Activated T-helper 1 cell treated with anti-CD3 and anti-CD28 coated beads, Interleukin-12 subunit alpha, Interleukin-12 subunit beta, Interleukin-2, Interleukin-4 antibody, amounts not matched to agents 30 ng/mL and 10 ng/mL and 1 ng/mL, durations not matched to agents 14 hours and 24 hours and 36 hours (primary cell): ENCODE measurements at regions of chr9 and their contacts with region 1.

Region 1: DNA sequence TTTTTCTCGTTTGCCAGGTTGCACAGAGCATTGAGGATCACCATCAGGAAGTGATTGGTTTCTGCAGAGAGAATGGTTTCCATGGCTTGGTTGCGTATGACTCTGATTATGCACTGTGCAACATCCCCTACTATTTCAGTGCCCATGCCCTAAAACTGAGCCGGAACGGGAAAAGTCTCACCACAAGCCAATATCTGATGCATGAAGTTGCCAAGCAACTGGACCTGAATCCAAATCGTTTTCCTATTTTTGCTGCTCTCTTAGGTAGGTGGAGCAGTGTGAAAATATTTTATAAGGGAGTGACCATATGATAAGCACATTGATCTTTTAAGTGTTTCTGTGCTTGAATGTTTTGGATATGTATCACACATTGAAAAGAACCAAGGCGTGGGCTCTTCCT is 17.7 kb upstream of the FAM120AOS start:
- DNase-seq: no peak
- H3K4me3 Mint-ChIP-seq: no peak overlapping the region
- H3K27ac Mint-ChIP-seq: no peak overlapping the region
- H3K4me1 Mint-ChIP-seq: peaks cover 68% of the 10 kb centered on the region
- H3K27me3 Mint-ChIP-seq: no peaks in the 10 kb centered on the region

Region 2: GRCh38 chr9:93319992-93320500 is 151.1 kb before region 1 on chr9:
- intact Hi-C with region 1: no loop called
- DNase-seq: no peak
- H3K4me3 Mint-ChIP-seq: no peak overlapping the region
- H3K27ac Mint-ChIP-seq: no peak overlapping the region
- H3K4me1 Mint-ChIP-seq: no peaks in the 10 kb centered on the region
- H3K27me3 Mint-ChIP-seq: peaks cover 10% of the 10 kb centered on the region

Region 3: DNA sequence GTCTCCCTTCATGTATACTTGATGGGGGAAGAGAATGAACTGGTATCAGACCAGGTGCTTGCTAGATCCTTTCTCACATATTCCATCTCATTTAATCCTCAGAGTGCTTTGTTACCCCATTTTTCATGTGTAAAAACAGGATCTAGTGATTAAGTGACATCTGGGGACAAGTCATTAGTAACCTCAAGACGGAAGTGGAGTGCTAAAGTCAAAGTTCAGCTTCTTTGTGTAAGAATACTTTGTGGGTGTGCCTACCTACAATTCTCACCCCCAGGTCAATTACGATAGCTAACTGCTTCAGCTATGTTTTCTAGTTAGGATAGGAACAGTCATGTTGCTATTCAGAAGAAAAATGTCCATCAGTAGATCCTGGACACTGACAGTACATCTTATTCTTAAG is 14.6 kb before region 1 on chr9:
- intact Hi-C with region 1: no loop called
- DNase-seq: no peak
- H3K4me3 Mint-ChIP-seq: peak overlapping the region; percentile 50
- H3K27ac Mint-ChIP-seq: peak overlapping the region; percentile 62
- H3K4me1 Mint-ChIP-seq: peaks cover 70% of the 10 kb centered on the region
- H3K27me3 Mint-ChIP-seq: no peaks in the 10 kb centered on the region

Region 4: DNA sequence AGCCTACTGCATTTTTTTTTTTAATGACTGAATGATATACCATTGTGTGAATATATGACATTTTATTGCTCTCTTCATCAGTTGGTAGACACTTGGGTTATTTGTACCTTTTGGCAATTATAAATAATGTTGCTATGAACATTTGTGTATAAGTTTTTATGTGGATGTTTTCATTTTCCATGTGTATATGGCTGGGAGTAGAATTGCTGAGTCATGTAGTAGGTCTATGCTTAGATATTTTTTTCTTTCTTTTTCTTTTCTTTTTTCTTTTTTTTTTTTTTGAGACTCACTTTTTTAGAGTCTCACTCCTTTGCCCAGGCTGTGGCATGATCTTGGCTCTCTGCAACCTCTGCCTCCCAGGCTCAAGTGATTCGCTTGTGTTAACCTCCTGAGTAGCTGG is 15.1 kb after region 1 on chr9:
- intact Hi-C with region 1: loop called (anchors 2 kb)
- DNase-seq: no peak
- H3K4me3 Mint-ChIP-seq: no peak overlapping the region
- H3K27ac Mint-ChIP-seq: peak overlapping the region; percentile 20
- H3K4me1 Mint-ChIP-seq: peaks cover 32% of the 10 kb centered on the region
- H3K27me3 Mint-ChIP-seq: no peaks in the 10 kb centered on the region

Region 5: DNA sequence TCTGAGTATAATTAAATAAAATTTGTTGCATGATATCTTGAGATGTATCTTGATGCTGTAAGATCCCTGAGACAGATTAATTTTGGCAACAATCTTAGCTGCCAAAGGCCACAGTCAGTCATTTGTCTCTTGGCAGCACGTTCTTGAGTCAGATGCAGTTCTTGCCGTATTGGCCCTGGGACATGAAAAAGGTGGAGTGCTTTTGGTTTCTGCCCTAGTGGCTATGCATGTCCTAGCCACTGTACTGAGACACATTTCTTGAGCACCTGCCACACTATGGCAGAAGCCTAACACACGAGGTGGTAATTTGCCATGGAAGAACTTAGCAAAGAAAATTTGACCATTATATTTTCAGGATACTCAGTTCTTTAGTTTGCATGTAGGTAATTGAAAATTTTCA is 60.2 kb after region 1 on chr9:
- intact Hi-C with region 1: no loop called
- DNase-seq: no peak
- H3K4me3 Mint-ChIP-seq: no peak overlapping the region
- H3K27ac Mint-ChIP-seq: no peak overlapping the region
- H3K4me1 Mint-ChIP-seq: peaks cover 3% of the 10 kb centered on the region
- H3K27me3 Mint-ChIP-seq: no peaks in the 10 kb centered on the region

Region 6: DNA sequence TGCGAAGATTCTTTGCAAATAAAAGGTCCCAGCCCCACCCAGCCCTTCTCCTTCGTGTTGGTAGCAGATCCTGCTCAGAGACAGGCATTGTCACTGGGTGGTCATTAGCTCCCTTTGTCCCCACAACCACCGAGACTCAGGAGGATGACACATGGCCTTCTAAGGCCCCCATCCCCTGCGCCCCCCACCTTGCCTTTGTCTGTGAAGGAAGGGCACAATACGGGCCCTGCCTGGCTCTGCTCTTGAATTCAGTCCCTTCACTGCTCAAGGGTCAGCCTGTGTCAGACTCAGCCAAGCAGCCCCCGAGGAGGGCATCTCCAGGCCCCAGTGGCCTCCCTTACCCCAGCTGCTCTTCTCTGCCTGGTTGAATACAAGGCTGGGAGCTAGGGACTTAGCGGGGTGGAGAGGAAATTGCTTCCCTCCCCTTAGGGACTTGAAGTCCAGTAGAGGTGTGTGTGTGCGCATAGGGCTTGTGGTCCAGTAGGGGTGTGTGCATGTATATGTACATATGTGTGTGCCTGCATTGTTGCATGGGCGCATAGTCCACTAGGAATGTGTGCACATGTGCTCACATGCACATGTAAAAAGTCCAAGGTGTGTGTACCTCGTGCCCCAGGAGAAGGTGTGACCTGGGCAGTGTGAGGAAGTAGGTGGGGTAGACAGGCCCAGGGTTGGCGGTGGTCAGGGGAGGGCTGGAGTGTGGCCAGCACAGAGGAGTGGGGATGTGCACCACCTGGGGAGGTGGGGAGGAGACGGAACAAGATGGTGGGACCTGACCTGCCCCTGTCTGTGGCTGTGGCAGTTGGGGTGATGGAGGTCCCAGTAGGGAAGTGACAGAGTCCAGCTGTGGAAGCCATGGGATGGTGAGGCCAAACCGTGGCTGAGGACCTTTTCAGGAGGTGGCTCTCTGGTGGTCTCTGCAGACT is 164.3 kb after region 1 on chr9:
- intact Hi-C with region 1: no loop called
- DNase-seq: no peak
- H3K4me3 Mint-ChIP-seq: no peak overlapping the region
- H3K27ac Mint-ChIP-seq: no peak overlapping the region
- H3K4me1 Mint-ChIP-seq: no peaks in the 10 kb centered on the region
- H3K27me3 Mint-ChIP-seq: no peaks in the 10 kb centered on the region